Activated T-helper 2 cell treated with anti-CD3 and anti-CD28 coated beads, Interferon-gamma antibody, Interleukin-2, Interleukin-4, amounts not matched to agents 10 μg/mL and 5 μg/mL and 100 μg/mL, durations not matched to agents 14 hours and 24 hours and 36 hours (primary cell): ENCODE measurements at regions of chr6 and their contacts with region 1.

Region 1: DNA sequence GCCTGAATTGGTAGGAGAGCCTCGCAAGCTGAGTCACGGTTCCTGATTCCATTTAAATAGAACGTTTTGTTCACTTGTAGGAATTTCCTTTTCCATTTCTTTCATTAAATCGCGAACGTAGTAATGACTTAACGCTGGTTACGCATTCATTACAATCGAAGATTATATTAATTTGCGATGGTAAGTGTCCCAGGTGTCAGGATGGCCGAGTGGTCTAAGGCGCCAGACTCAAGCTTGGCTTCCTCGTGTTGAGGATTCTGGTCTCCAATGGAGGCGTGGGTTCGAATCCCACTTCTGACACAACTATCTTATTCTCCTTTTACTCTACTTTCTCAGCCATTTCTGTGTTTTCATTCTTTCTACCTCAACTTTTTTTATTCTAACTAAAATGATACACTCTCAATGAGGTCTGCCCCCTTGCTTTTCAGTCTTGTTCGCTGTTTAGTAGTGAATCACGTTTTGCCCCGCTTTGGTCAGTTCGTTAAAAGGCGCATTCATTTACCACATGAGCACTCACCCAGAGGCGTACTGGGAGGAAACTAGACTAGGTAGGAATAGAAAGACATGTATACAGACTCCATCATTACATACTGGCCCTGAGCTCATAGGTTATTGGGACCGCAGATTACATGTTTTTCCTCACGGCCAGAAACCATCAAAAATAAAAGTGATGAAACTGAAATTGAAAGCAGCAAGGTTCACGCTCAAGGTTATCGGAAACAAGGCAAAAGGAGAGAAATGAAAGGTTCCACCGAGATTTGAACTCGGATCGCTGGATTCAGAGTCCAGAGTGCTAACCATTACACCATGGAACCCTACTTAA is 17.3 kb upstream of the TRIM27 start:
- DNase-seq: peak; percentile 77
- H3K4me3 Mint-ChIP-seq: peak overlapping the region; percentile 86
- H3K27ac Mint-ChIP-seq: peak overlapping the region; percentile 99
- H3K4me1 Mint-ChIP-seq: peaks cover 37% of the 10 kb centered on the region
- H3K27me3 Mint-ChIP-seq: peaks cover 5% of the 10 kb centered on the region

Region 2: GRCh38 chr6:27479319-27480182 is 1461.5 kb before region 1 on chr6:
- intact Hi-C with region 1: loop called (anchors 5 kb)
- DNase-seq: peak; percentile 82
- H3K4me3 Mint-ChIP-seq: no peak overlapping the region
- H3K27ac Mint-ChIP-seq: no peak overlapping the region
- H3K4me1 Mint-ChIP-seq: peaks cover 3% of the 10 kb centered on the region
- H3K27me3 Mint-ChIP-seq: peaks cover 12% of the 10 kb centered on the region

Region 3: GRCh38 chr6:28657769-28658465 is 283.2 kb before region 1 on chr6:
- intact Hi-C with region 1: loop called (anchors 5 kb)
- DNase-seq: peak; percentile 31
- H3K4me3 Mint-ChIP-seq: peak overlapping the region; percentile 80
- H3K27ac Mint-ChIP-seq: peak overlapping the region; percentile 47
- H3K4me1 Mint-ChIP-seq: peaks cover 26% of the 10 kb centered on the region
- H3K27me3 Mint-ChIP-seq: peaks cover 59% of the 10 kb centered on the region

Region 4: DNA sequence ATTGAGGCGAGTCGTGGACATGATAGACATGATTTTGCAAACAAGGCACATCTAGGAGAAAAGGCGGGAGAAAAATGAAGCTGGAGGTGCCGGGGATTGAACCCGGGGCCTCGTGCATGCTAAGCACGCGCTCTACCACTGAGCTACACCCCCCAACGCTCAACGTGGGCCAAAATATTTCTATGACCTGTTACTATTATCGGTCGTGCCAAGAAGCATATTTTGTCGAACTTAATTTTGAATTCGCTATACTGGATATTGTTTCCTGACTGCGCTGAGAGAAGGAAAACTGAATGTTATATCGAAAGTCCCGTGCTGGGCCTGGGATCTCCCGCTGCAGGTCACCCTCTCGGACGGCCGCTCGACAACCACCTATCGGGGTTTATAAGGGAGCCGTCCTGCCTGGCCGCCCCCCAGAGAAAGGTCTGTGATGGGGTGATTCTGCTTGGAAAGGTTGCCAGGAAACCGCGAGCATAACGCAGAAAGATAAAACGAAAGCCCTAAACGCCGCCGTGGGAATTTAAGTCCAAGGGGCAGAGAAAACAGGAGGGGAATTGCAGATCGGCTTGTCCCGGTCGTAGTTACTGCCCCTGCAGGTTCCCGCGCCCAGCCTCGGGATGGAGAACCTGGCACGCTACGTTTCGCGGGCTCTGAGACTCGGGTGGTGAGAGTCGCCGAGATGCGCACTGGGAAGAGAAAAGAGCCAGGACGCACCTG is 77.3 kb before region 1 on chr6:
- intact Hi-C with region 1: loop called (anchors 2 kb)
- DNase-seq: peak; percentile 78
- H3K4me3 Mint-ChIP-seq: peak overlapping the region; percentile 93
- H3K27ac Mint-ChIP-seq: peak overlapping the region; percentile 78
- H3K4me1 Mint-ChIP-seq: peaks cover 38% of the 10 kb centered on the region
- H3K27me3 Mint-ChIP-seq: peaks cover 18% of the 10 kb centered on the region

Region 5: GRCh38 chr6:28923318-28924102 is 17.6 kb before region 1 on chr6 and contains the start of gene TRIM27:
- intact Hi-C with region 1: loop called (anchors 1 kb)
- DNase-seq: peak; percentile 78
- H3K4me3 Mint-ChIP-seq: peak within 1 kb of the TSS; percentile 93
- H3K27ac Mint-ChIP-seq: peak within 1 kb of the TSS; percentile 88
- H3K4me1 Mint-ChIP-seq: peaks cover 28% of the 10 kb centered on the region
- H3K27me3 Mint-ChIP-seq: no peaks in the 10 kb centered on the region
- total RNA-seq, gene TRIM27: 64.4 and 69.6 TPM in 2 replicates

Region 6: GRCh38 chr6:28981833-28982475 is 40.9 kb after region 1 on chr6:
- intact Hi-C with region 1: loop called (anchors 1 kb)
- DNase-seq: peak; percentile 64
- H3K4me3 Mint-ChIP-seq: peak overlapping the region; percentile 89
- H3K27ac Mint-ChIP-seq: peak overlapping the region; percentile 80
- H3K4me1 Mint-ChIP-seq: peaks cover 43% of the 10 kb centered on the region
- H3K27me3 Mint-ChIP-seq: peaks cover 41% of the 10 kb centered on the region